CD8-positive, alpha-beta T cell (primary cell): ENCODE measurements at regions of chr1 and their contacts with region 1.

Region 1: GRCh38 chr1:116570358-116571200 is at the start of gene CD58:
- DNase-seq: peak; percentile 53 to 89 (median 76)
- ATAC-seq: peak; percentile 75
- H3K4me3 ChIP-seq: peak within 1 kb of the TSS; percentile 88 to 95
- H3K4me3 Mint-ChIP-seq: peak within 1 kb of the TSS; percentile 92
- H3K27ac ChIP-seq: peak within 1 kb of the TSS; percentile 62 to 89
- H3K27ac Mint-ChIP-seq: peak within 1 kb of the TSS; percentile 92
- H3K4me1 ChIP-seq: peaks cover 3% of the 10 kb centered on the region
- H3K4me1 Mint-ChIP-seq: peaks cover 38% of the 10 kb centered on the region
- H3K27me3 ChIP-seq: no peaks in the 10 kb centered on the region
- H3K27me3 Mint-ChIP-seq: no peaks in the 10 kb centered on the region
- CTCF ChIP-seq: peak; percentile 73
- total RNA-seq, gene CD58: 5.4 to 6.6 TPM

Region 2: DNA sequence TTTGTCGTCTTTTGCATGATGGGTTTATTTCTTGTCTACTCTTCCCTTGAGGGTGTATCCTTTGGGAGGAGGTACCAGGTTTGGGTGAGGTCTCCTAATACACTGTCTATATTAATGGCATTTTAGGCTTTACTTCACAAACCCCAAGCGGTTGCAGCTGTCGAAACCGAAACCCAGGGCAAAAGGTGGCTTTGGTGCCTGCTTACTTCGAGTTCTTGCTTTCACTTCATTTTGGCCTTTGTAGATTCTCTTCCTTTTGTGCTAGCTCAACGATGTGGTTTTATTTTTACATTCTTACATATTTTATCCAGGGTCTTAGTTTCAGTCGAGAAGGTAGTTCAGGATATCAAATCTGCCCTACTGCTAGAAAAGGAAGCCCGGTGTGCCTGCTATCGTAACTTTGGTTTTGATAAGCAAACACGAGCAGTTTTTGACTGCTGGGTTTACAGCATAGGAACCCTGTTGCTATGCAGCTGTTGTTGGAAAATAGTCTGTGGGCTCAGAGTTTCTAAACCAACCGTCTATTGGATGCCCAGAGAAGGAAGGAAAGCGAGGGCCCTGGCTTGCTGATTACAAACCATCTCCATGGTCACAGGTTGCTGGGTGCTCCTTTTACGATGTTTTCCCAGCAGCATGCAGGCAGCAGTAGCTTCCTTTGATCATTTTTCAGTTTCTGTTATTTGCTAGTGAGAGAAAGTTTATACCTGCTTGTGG is 1471.4 kb before region 1 on chr1:
- CTCF ChIA-PET with region 1: no interaction called
- POLR2A ChIA-PET with region 1: no interaction called
- intact Hi-C with region 1: loop called in 1 of 2 experiments (anchors 2 kb)
- DNase-seq: peak; percentile 55 to 96 (median 74)
- ATAC-seq: peak; percentile 89
- H3K4me3 ChIP-seq: peak overlapping the region; percentile 51 to 56
- H3K4me3 Mint-ChIP-seq: peak overlapping the region; percentile 86
- H3K27ac ChIP-seq: peak overlapping the region; percentile 95
- H3K27ac Mint-ChIP-seq: peak overlapping the region; percentile 97
- H3K4me1 ChIP-seq: peaks cover 27% of the 10 kb centered on the region
- H3K4me1 Mint-ChIP-seq: peaks cover 36% of the 10 kb centered on the region
- H3K27me3 ChIP-seq: no peaks in the 10 kb centered on the region
- H3K27me3 Mint-ChIP-seq: no peaks in the 10 kb centered on the region
- CTCF ChIP-seq: no peak

Region 3: GRCh38 chr1:116325922-116326321 is 244.7 kb before region 1 on chr1:
- CTCF ChIA-PET with region 1: no interaction called
- POLR2A ChIA-PET with region 1: no interaction called
- intact Hi-C with region 1: loop called in 1 of 2 experiments (anchors 5 kb)
- DNase-seq: peak in 8 of 9 experiments; percentile 8 to 78 (median 58)
- ATAC-seq: peak; percentile 85
- H3K4me3 ChIP-seq: peak overlapping the region; percentile 3 to 34
- H3K4me3 Mint-ChIP-seq: peak overlapping the region; percentile 70
- H3K27ac ChIP-seq: peak overlapping the region; percentile 55 to 78
- H3K27ac Mint-ChIP-seq: peak overlapping the region; percentile 95
- H3K4me1 ChIP-seq: peaks cover 84% of the 10 kb centered on the region
- H3K4me1 Mint-ChIP-seq: peaks cover 90% of the 10 kb centered on the region
- H3K27me3 ChIP-seq: no peaks in the 10 kb centered on the region
- H3K27me3 Mint-ChIP-seq: no peaks in the 10 kb centered on the region
- CTCF ChIP-seq: no peak

Region 4: DNA sequence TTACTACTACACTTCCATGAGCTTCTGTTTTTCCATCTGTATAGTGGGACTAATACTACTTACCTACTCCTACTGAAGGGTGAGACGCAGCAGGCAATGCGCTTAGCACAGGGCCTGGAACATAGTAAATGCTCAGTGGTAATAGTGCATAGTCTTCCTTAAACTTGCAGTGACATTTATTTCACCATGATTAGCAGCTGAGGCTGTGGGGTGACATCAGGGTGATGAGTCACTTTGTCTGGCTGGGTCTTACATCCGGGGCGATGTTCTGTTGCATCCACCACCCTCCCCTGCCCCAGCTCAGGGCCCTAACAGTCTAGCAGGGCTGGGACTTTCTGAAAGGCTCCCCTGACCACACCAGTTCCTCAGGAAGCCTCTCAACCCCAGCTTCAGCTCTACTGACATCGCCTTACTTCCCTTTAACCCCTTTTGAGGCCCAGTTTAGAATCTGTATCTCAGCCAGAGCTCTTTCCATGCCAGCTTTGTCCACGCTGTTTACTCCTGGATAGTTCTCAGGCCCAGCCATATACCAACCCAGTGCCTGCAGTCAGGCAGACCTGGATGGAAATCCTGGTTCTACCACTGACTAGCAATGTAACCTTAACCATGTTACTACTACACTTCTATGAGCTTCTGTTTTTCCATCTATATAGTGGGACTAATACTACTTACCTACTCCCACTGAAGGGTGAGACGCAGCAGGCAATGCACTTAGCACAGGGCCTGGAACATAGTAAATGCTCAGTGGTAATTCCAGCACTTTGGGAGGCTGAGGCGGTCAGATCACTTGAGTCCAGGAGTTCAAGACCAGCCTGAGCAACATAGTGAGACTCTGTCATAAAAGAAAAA is 66.0 kb before region 1 on chr1:
- CTCF ChIA-PET with region 1: interaction called, 4 read pairs
- POLR2A ChIA-PET with region 1: no interaction called
- intact Hi-C with region 1: loop called (anchors 1 to 2 kb)
- DNase-seq: peak; percentile 71 to 97 (median 88)
- ATAC-seq: peak; percentile 93
- H3K4me3 ChIP-seq: no peak overlapping the region
- H3K4me3 Mint-ChIP-seq: peak overlapping the region; percentile 19
- H3K27ac ChIP-seq: peak overlapping the region; percentile 22 to 92
- H3K27ac Mint-ChIP-seq: peak overlapping the region; percentile 91
- H3K4me1 ChIP-seq: peaks cover 26% of the 10 kb centered on the region
- H3K4me1 Mint-ChIP-seq: peaks cover 42% of the 10 kb centered on the region
- H3K27me3 ChIP-seq: no peaks in the 10 kb centered on the region
- H3K27me3 Mint-ChIP-seq: no peaks in the 10 kb centered on the region
- CTCF ChIP-seq: no peak

Region 5: DNA sequence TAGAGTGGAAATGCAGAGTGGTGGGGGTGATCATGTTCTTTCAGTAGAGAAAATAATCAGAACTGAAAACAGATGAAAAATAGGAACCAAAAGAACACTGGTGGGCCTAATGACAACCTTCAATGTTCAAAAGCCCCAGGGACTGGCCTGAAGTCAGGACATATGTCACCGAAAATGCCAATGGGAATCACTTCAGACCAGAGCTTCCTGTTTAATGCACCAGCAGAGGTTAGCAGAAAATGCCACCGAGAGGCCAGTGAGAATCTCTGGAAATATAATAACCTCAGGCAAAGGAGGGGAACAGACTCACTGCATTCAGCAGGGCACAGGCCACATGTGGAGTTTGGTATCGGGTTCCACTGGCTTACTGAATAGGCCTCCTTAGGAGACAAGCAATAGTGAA is 16.2 kb after region 1 on chr1:
- CTCF ChIA-PET with region 1: interaction called, 13 read pairs
- POLR2A ChIA-PET with region 1: no interaction called
- intact Hi-C with region 1: no loop called
- DNase-seq: no peak
- ATAC-seq: no peak
- H3K4me3 ChIP-seq: no peak overlapping the region
- H3K4me3 Mint-ChIP-seq: no peak overlapping the region
- H3K27ac ChIP-seq: no peak overlapping the region
- H3K27ac Mint-ChIP-seq: no peak overlapping the region
- H3K4me1 ChIP-seq: no peaks in the 10 kb centered on the region
- H3K4me1 Mint-ChIP-seq: no peaks in the 10 kb centered on the region
- H3K27me3 ChIP-seq: no peaks in the 10 kb centered on the region
- H3K27me3 Mint-ChIP-seq: no peaks in the 10 kb centered on the region
- CTCF ChIP-seq: no peak

Region 6: GRCh38 chr1:116878804-116879477 is 308.4 kb after region 1 on chr1:
- CTCF ChIA-PET with region 1: no interaction called
- POLR2A ChIA-PET with region 1: no interaction called
- intact Hi-C with region 1: loop called in 1 of 2 experiments (anchors 10 kb)
- DNase-seq: peak in 3 of 9 experiments; percentile 16 to 22 (median 16)
- ATAC-seq: no peak
- H3K4me3 ChIP-seq: peak overlapping the region in 1 of 2 experiments; percentile 24
- H3K4me3 Mint-ChIP-seq: no peak overlapping the region
- H3K27ac ChIP-seq: no peak overlapping the region
- H3K27ac Mint-ChIP-seq: no peak overlapping the region
- H3K4me1 ChIP-seq: peaks cover 35% of the 10 kb centered on the region
- H3K4me1 Mint-ChIP-seq: peaks cover 13% of the 10 kb centered on the region
- H3K27me3 ChIP-seq: no peaks in the 10 kb centered on the region
- H3K27me3 Mint-ChIP-seq: no peaks in the 10 kb centered on the region
- CTCF ChIP-seq: no peak

Region 7: GRCh38 chr1:117367047-117368018 is 796.8 kb after region 1 on chr1 and contains the start of gene MAN1A2:
- CTCF ChIA-PET with region 1: no interaction called
- POLR2A ChIA-PET with region 1: no interaction called
- intact Hi-C with region 1: loop called in 1 of 2 experiments (anchors 10 kb)
- DNase-seq: peak; percentile 31 to 87 (median 71)
- ATAC-seq: peak; percentile 61
- H3K4me3 ChIP-seq: peak within 1 kb of the TSS; percentile 57 to 84
- H3K4me3 Mint-ChIP-seq: peak within 1 kb of the TSS; percentile 95
- H3K27ac ChIP-seq: peak within 1 kb of the TSS; percentile 63 to 91
- H3K27ac Mint-ChIP-seq: peak within 1 kb of the TSS; percentile 97
- H3K4me1 ChIP-seq: peaks cover 52% of the 10 kb centered on the region
- H3K4me1 Mint-ChIP-seq: peaks cover 76% of the 10 kb centered on the region
- H3K27me3 ChIP-seq: no peaks in the 10 kb centered on the region
- H3K27me3 Mint-ChIP-seq: no peaks in the 10 kb centered on the region
- CTCF ChIP-seq: no peak
- total RNA-seq, gene MAN1A2: 46.5 to 49.3 TPM